ENCODE measurements at regions of chr6 and their contacts with region 1.

Region 1: GRCh38 chr6:67068781-67069180 is 1361.8 kb upstream of the EYS start:
- DNase-seq: no peak
- ATAC-seq: peak; percentile 50
- H3K4me3 Mint-ChIP-seq: no peak overlapping the region
- H3K27ac Mint-ChIP-seq: no peak overlapping the region
- H3K4me1 Mint-ChIP-seq: peaks cover 4% of the 10 kb centered on the region
- H3K27me3 Mint-ChIP-seq: no peaks in the 10 kb centered on the region
- CTCF ChIP-seq: no peak

Region 2: GRCh38 chr6:67086184-67086748 is 17.5 kb after region 1 on chr6:
- CTCF ChIA-PET with region 1: no interaction called
- POLR2A ChIA-PET with region 1: no interaction called
- DNase-seq: no peak
- ATAC-seq: no peak
- H3K4me3 Mint-ChIP-seq: no peak overlapping the region
- H3K27ac Mint-ChIP-seq: no peak overlapping the region
- H3K4me1 Mint-ChIP-seq: no peaks in the 10 kb centered on the region
- H3K27me3 Mint-ChIP-seq: no peaks in the 10 kb centered on the region
- CTCF ChIP-seq: no peak

Region 3: GRCh38 chr6:68313911-68314310 is 1245.1 kb after region 1 on chr6:
- CTCF ChIA-PET with region 1: interaction called, 11 read pairs
- POLR2A ChIA-PET with region 1: no interaction called
- DNase-seq: no peak
- ATAC-seq: no peak
- H3K4me3 Mint-ChIP-seq: no peak overlapping the region
- H3K27ac Mint-ChIP-seq: no peak overlapping the region
- H3K4me1 Mint-ChIP-seq: no peaks in the 10 kb centered on the region
- H3K27me3 Mint-ChIP-seq: no peaks in the 10 kb centered on the region
- CTCF ChIP-seq: no peak

Measured in WTC11 (cell line).